Body of pancreas (tissue), 4 donors: ENCODE measurements at regions of chr1 and their contacts with region 1.

Region 1: DNA sequence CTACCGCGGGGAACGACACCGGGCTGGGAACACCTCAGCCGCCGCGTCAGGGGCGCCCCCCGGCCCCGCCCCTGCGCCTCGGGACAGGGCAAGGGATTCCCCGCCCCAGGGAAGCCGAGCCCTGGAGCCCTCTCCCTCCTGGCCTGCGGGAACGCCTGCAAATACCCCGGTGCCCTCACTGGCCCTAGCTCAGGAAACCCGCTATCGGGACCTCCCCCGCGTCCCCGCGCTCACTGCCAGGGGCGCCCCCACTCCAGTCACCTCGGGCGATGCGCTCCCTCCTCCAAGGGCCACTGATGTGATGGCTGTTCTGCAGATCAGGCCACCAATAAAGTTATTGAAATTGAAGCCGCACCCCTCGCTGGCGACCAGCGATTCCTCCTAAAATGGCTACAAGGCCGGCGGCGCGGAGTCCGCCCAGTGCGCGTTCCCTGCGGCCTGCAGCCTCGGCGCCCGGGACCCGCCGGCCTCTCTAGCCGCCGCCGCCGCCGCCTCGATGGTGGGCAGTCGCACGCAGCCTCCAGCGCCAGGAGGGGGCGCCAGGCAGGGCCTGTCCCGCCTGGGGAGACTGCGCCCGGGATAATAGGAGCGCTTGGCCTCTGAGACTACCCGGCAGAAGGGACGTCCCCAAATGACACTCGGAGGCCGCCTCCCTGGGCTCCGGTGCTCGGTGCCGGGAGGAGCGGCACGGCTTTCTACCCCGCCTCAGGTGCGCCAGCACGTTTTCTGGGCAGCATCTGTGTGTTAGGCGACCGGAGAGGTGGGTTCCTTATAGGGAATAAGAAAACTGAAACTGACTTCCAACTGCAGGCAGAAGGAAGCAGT is at the start of gene PRKAB2:
- DNase-seq: peak; percentile 96 to 98 (median 97)
- ATAC-seq: peak; percentile 95
- H3K4me3 ChIP-seq: peak within 1 kb of the TSS; percentile 73 to 87
- H3K27ac ChIP-seq: peak within 1 kb of the TSS; percentile 89 to 94 (median 93)
- H3K4me1 ChIP-seq: peaks cover 54% of the 10 kb centered on the region
- H3K27me3 ChIP-seq: no peaks in the 10 kb centered on the region
- CTCF ChIP-seq: peak; percentile 91 to 100 (median 95)
- POLR2A ChIP-seq: peak; percentile 74 to 92 (median 89)
- total RNA-seq, gene PRKAB2: 11.9 to 19.5 TPM

Region 2: DNA sequence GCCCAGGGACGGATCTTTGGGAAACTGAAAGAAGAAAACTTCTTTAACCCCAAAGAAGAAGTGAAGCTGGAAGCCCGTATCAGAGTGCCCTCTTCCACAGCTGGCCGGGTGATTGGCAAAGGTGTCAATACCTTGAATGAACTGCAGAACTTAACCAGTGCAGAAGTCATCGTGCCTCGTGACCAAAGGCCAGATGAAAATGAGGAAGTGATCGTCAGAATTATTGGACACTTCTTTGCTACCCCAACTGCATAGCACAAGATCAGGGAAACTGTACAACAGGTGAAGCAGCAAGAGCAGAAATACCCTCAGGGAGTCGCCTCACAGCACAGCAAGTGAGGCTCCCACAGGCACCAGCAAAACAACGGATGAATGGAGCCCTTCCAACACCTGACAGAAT is 120.2 kb before region 1 on chr1:
- intact Hi-C with region 1: no loop called
- DNase-seq: no peak
- ATAC-seq: no peak
- H3K4me3 ChIP-seq: no peak overlapping the region
- H3K27ac ChIP-seq: no peak overlapping the region
- H3K4me1 ChIP-seq: no peaks in the 10 kb centered on the region
- H3K27me3 ChIP-seq: no peaks in the 10 kb centered on the region
- CTCF ChIP-seq: no peak
- POLR2A ChIP-seq: no peak

Region 3: DNA sequence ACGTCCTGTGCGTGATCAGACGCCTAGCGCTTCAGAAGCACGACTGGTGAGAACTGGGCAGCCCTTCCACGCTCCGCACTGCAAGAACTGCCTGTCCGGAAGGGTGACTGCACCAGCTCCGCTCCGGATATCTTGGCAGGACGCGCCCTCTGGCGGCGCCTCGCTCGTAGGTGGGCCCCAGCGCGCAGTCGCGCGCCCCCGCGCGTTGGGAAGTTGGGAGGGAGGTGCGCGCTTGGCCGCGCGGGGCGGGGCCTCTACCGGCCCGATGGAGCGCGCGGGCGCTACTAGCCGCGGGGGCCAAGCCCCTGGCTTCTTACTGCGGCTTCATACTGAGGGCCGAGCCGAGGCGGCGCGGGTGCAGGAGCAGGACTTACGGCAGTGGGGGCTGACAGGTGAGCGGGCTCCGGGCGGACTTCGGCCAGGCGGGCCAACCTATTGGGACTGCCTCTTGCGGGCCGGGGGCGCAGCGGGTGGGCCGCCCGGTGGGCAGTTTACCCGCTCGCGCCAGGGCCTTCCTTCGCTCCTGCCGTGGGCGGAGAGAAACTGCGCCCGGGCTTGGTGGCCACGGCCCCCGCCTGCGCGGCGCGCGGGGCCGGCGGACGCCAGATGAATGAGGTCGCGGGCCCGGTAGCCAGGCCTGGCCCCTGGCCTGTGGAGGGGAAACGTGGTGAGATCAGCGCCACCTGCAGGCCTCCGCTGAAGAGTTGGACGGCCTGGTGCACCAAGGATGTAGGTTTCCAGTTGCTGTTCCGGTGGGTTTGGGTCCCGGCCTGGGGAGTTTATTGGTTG is 70.3 kb after region 1 on chr1 and contains the start of gene CHD1L:
- intact Hi-C with region 1: loop called (anchors 10 kb)
- DNase-seq: peak; percentile 96 to 98 (median 97)
- ATAC-seq: peak; percentile 93
- H3K4me3 ChIP-seq: peak within 1 kb of the TSS; percentile 64 to 65
- H3K27ac ChIP-seq: peak within 1 kb of the TSS; percentile 69 to 91 (median 79)
- H3K4me1 ChIP-seq: peaks cover 53% of the 10 kb centered on the region
- H3K27me3 ChIP-seq: no peaks in the 10 kb centered on the region
- CTCF ChIP-seq: peak; percentile 79 to 100 (median 97)
- POLR2A ChIP-seq: peak; percentile 29 to 83 (median 74)
- total RNA-seq, gene CHD1L: 11.5 to 21.5 TPM